Vagina (tissue), 2 donors: ENCODE measurements at regions of chr15 and their contacts with region 1.

Region 1: DNA sequence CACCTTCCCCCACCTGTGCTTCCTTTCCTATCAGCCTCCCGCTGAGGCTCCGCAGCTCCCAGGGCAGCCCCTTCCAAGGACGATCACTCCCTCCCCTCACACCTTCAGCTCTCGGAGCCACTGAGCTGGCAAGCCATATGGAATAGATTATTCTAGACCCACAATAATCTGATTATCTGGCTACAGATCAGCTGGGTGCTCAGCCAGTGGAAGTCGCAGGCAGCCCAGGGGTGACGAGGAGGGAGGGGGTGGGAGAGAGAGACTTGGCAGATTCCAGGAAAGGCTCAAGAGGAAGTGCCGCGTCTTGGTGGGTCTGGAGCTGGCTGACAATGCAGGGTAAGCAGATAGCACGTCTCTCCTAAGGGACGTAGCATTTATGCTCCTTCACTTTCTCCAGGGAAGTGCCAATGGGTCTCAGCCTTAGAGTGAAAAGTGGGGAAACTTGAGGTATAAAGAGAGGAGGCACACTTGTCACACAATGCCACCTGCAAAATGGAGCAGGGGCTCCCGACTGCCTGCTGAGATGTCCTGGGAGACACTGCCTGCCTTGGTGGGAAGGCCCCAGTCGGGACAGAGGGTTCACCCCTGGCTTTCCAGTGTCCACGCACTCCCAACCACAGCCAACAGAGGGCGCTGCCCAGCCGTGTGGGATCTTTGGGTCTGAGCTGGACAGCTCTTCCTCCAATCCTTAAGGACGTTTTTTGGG is 9.4 kb upstream of the MESP1 start:
- DNase-seq: peak in 1 of 2 donors; percentile 82
- H3K4me3 ChIP-seq: no peak overlapping the region
- H3K27ac ChIP-seq: no peak overlapping the region
- H3K4me1 ChIP-seq: peaks cover 18% of the 10 kb centered on the region
- H3K27me3 ChIP-seq: no peaks in the 10 kb centered on the region
- CTCF ChIP-seq: peak; percentile 77 to 92 (median 79)
- POLR2A ChIP-seq: no peak

Region 2: DNA sequence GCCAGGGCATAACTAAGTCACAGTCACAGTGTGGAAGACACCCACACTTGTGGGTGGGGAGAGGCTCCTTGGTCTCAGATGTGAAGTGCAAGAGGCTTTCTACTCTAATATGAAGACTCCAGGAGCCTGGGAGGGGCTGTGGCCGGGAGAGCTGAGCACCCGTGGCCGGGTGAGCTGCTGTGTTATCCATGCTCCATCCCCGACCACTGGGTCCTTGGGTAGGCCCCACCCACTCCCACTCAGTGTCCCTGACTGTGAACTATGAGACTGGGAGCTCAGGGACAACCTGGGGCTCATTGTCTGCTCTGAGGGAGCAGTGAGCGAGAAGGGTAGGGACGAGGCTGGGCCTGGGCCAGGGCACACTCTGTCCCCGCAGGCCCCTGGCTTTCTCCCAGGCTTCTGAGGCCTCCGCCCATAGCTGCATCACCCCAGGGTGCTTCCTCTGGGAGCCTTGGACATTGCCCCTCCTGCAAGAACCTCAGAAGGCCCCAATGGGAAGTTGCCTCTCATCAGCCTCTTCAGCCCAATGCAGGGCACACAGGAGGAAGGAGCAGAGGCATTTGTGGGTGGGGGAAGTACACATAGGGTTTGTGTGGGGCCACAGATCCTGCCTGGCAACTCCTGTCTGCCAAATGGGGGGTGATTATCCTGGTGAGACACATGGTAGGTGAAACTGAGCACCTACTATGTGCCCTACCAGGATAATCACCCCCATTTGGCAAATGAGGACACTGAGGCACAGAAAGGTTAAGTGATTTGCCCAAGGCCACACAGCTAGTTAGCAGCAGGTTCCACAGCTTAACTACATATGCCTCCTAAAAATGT is 51.8 kb after region 1 on chr15:
- intact Hi-C with region 1: no loop called
- DNase-seq: no peak
- H3K4me3 ChIP-seq: no peak overlapping the region
- H3K27ac ChIP-seq: peak overlapping the region; percentile 72
- H3K4me1 ChIP-seq: peaks cover 62% of the 10 kb centered on the region
- H3K27me3 ChIP-seq: no peaks in the 10 kb centered on the region
- CTCF ChIP-seq: no peak
- POLR2A ChIP-seq: no peak

Region 3: DNA sequence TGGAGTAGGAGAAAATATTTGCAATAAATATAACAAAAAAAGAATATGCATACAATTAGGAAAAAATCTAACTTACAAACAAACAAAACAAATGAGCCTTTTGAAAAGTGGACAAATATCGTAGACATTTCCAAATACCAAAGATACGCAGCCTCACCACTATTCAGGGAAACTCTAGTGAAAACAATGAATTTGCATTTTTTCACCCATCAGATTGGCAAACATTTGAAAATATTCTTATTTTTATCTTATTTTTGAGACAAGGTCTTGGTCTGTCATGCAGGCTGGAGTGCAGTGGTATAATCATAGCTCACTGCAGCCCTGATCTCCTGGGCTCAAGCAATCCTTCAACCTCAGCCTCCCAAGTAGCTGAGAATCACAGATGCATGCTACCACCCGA is 117.9 kb after region 1 on chr15:
- intact Hi-C with region 1: loop called (anchors 2 kb)
- DNase-seq: no peak
- H3K4me3 ChIP-seq: no peak overlapping the region
- H3K27ac ChIP-seq: no peak overlapping the region
- H3K4me1 ChIP-seq: no peaks in the 10 kb centered on the region
- H3K27me3 ChIP-seq: no peaks in the 10 kb centered on the region
- CTCF ChIP-seq: no peak
- POLR2A ChIP-seq: no peak

Region 4: GRCh38 chr15:90071208-90071807 is 310.9 kb after region 1 on chr15:
- intact Hi-C with region 1: loop called (anchors 5 kb)
- DNase-seq: no peak
- H3K4me3 ChIP-seq: no peak overlapping the region
- H3K27ac ChIP-seq: peak overlapping the region; percentile 5
- H3K4me1 ChIP-seq: peaks cover 6% of the 10 kb centered on the region
- H3K27me3 ChIP-seq: no peaks in the 10 kb centered on the region
- CTCF ChIP-seq: peak; percentile 51 to 81 (median 75)
- POLR2A ChIP-seq: no peak